ENCODE measurements at regions of chr5 and their contacts with region 1.

Region 1: GRCh38 chr5:142548739-142549275 is 137.1 kb downstream of the FGF1 start:
- DNase-seq: peak; percentile 23 to 76
- ATAC-seq: peak; percentile 82 to 92 (median 86)
- H3K4me3 ChIP-seq: no peak overlapping the region
- H3K27ac ChIP-seq: peak overlapping the region in 3 of 10 donors; percentile 7 to 14 (median 11)
- H3K4me1 ChIP-seq: peaks cover 2 to 69% (median 38%) of the 10 kb centered on the region in 9 donors
- H3K27me3 ChIP-seq: peaks cover 0 to 28% (median 0%) of the 10 kb centered on the region in 7 donors
- CTCF ChIP-seq: peak; percentile 58 to 91 (median 78)

Region 2: DNA sequence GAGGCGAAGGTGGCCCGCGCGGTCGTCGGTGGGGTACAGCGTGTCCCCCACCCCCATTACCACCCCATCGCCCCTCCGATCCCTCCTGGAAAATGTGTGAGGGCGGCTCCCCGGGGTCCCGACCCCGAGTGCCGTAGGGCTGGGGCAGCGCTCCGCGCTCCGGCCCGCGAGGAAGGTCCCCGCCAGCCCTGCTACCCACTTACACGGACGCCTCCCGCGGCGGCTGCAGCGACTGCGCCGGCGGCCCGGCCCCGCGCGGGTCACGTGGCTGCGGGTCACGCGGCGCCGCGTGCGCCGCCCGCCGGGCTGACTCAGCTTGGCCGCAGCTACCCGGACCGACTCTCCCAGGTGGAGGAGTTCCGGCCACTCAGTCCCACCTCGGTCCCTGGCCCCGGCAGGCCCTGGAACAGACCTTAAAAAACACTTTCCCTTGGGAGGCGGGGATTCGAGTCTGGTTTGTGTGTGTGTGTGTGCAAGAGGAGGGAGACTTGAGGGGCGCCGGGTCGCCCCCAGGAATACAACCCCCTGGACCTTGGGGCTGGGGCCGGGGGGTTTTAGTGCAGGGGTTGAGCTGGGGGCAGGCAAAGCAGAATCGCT is 535.9 kb before region 1 on chr5 and contains the start of gene GNPDA1:
- intact Hi-C with region 1: loop called in 2 of 10 experiments (anchors 10 kb)
- DNase-seq: peak; percentile 82 to 83
- ATAC-seq: peak; percentile 88 to 98 (median 92)
- H3K4me3 ChIP-seq: peak within 1 kb of the TSS; percentile 45 to 85 (median 77)
- H3K27ac ChIP-seq: peak within 1 kb of the TSS; percentile 18 to 94 (median 87)
- H3K4me1 ChIP-seq: peaks cover 0 to 51% (median 10%) of the 10 kb centered on the region in 9 donors
- H3K27me3 ChIP-seq: no peaks in the 10 kb centered on the region
- CTCF ChIP-seq: peak in 3 of 9 donors; percentile 20 to 38 (median 26)
- total RNA-seq, gene GNPDA1: 18.9 to 24.3 (median 20.9) TPM

Region 3: DNA sequence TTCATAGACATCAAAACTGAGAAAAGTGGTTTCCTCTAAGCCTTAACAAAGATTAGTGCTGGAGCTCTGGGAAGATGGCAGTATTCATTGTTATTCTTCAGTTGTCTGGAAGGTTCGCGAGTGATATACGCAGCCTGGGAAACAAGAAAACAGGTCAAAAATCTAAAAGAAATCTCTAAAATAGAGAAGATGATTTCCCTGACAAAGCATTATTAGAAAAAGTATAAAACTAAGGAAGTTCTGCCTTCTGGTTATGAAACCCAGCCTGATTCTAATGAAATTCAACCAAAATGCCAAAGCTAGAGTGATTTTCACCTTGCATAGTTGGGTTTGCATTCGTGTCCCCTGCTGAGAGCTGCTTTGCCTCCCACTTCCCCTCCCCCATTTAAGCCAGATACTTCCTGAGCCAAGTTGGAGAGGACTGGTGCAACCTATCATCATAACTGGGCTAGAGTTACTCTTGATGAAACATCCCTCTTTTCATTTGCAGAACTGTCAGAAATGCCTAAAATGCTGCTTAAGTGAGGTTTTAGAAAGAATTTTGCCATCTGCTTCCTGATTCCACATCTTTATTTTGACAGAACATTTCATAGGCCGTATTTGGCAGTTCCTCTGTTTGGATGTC is 391.9 kb before region 1 on chr5:
- intact Hi-C with region 1: loop called in 8 of 10 experiments (anchors 1 to 5 kb)
- DNase-seq: no peak
- ATAC-seq: peak in 3 of 8 donors; percentile 46 to 54 (median 49)
- H3K4me3 ChIP-seq: no peak overlapping the region
- H3K27ac ChIP-seq: peak overlapping the region in 1 of 10 donors; percentile 14
- H3K4me1 ChIP-seq: peaks cover 3 to 22% (median 9%) of the 10 kb centered on the region in 9 donors
- H3K27me3 ChIP-seq: no peaks in the 10 kb centered on the region
- CTCF ChIP-seq: no peak

Region 4: GRCh38 chr5:142324871-142325724 is 223.7 kb before region 1 on chr5 and contains the start of gene SPRY4:
- intact Hi-C with region 1: loop called in 6 of 10 experiments (anchors 5 to 10 kb)
- DNase-seq: peak; percentile 94 to 95
- ATAC-seq: peak; percentile 75 to 89 (median 81)
- H3K4me3 ChIP-seq: peak within 1 kb of the TSS; percentile 63 to 99 (median 79)
- H3K27ac ChIP-seq: peak within 1 kb of the TSS; percentile 88 to 97 (median 92)
- H3K4me1 ChIP-seq: peaks cover 13 to 73% (median 56%) of the 10 kb centered on the region in 9 donors
- H3K27me3 ChIP-seq: peaks cover 0 to 76% (median 0%) of the 10 kb centered on the region in 7 donors
- CTCF ChIP-seq: peak in 1 of 9 donors; percentile 4
- total RNA-seq, gene SPRY4: 7.4 to 13.7 (median 10.1) TPM

Region 5: DNA sequence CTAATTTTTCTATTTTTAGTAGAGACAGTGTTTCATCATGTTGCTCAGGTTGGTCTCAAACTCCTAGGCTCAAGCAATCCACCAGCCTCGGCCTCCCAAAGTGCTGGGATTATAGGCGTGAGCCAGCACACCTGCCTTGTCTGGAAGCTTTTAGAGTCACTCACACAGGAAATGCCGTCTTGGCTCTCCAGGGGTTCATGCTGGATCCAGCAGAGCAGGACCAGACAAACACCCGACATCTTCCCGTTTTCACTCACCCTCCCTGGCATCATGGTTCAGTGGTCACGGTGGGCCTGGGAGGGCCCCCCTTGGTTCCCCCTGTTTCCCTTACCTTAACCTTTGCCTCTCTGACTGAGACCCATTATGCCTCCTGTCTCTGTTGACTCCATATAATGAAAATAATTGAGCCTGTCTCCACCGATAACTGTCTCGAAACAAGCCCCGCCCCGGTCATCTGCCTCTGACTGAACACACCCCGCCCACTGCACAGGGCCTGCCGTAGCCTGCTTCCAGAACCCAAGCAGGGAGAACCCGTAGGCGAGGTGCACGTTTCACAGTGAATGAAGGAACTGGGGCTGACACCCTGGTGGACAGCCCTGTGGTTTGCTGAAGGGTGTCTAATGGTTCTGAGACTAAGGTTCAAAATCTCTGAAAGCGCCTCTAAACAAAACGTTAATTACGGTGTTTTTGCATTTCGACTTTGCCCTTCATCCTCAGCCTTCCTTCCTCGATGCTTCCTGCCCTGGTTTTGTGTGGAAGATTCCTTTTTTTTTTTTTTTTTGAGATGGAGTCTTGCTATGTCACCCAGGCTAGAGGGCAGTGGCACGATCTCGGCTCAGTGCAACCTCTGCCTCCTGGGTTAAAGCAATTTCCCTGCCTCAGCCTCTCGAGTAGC is 184.3 kb before region 1 on chr5:
- intact Hi-C with region 1: loop called in 3 of 10 experiments (anchors 2 to 5 kb)
- DNase-seq: peak; percentile 64 to 75
- ATAC-seq: peak; percentile 15 to 66 (median 45)
- H3K4me3 ChIP-seq: peak overlapping the region in 5 of 10 donors; percentile 13 to 34 (median 29)
- H3K27ac ChIP-seq: peak overlapping the region in 9 of 10 donors; percentile 71 to 96 (median 88)
- H3K4me1 ChIP-seq: peaks cover 3 to 36% (median 23%) of the 10 kb centered on the region in 9 donors
- H3K27me3 ChIP-seq: peaks cover 0 to 29% (median 0%) of the 10 kb centered on the region in 7 donors
- CTCF ChIP-seq: no peak

Region 6: GRCh38 chr5:142432369-142432863 is 116.4 kb before region 1 on chr5:
- intact Hi-C with region 1: loop called in 8 of 10 experiments (anchors 5 to 10 kb)
- DNase-seq: peak in 1 of 2 donors; percentile 13
- ATAC-seq: peak in 5 of 8 donors; percentile 32 to 61 (median 45)
- H3K4me3 ChIP-seq: no peak overlapping the region
- H3K27ac ChIP-seq: peak overlapping the region in 4 of 10 donors; percentile 7 to 70 (median 52)
- H3K4me1 ChIP-seq: peaks cover 5 to 59% (median 27%) of the 10 kb centered on the region in 9 donors
- H3K27me3 ChIP-seq: peaks cover 0 to 13% (median 0%) of the 10 kb centered on the region in 7 donors
- CTCF ChIP-seq: no peak